Activated CD8-positive, alpha-beta T cell treated with anti-CD3 and anti-CD28 coated beads, Interleukin-2, amount 10 ng/mL, durations not matched to agents 7 days and 5 days (primary cell): ENCODE measurements at regions of chr10 and their contacts with region 1.

Region 1: GRCh38 chr10:97676770-97677581 is 10.1 kb downstream of the AVPI1 start:
- DNase-seq: peak; percentile 58
- ATAC-seq: peak; percentile 82
- H3K4me3 Mint-ChIP-seq: no peak overlapping the region
- H3K27ac Mint-ChIP-seq: no peak overlapping the region
- H3K4me1 Mint-ChIP-seq: peaks cover 23% of the 10 kb centered on the region
- H3K27me3 Mint-ChIP-seq: no peaks in the 10 kb centered on the region

Region 2: GRCh38 chr10:97664282-97664850 is 12.6 kb before region 1 on chr10:
- CTCF ChIA-PET with region 1: interaction called, 11 read pairs
- POLR2A ChIA-PET with region 1: no interaction called
- DNase-seq: no peak
- ATAC-seq: no peak
- H3K4me3 Mint-ChIP-seq: no peak overlapping the region
- H3K27ac Mint-ChIP-seq: no peak overlapping the region
- H3K4me1 Mint-ChIP-seq: peaks cover 3% of the 10 kb centered on the region
- H3K27me3 Mint-ChIP-seq: no peaks in the 10 kb centered on the region

Region 3: DNA sequence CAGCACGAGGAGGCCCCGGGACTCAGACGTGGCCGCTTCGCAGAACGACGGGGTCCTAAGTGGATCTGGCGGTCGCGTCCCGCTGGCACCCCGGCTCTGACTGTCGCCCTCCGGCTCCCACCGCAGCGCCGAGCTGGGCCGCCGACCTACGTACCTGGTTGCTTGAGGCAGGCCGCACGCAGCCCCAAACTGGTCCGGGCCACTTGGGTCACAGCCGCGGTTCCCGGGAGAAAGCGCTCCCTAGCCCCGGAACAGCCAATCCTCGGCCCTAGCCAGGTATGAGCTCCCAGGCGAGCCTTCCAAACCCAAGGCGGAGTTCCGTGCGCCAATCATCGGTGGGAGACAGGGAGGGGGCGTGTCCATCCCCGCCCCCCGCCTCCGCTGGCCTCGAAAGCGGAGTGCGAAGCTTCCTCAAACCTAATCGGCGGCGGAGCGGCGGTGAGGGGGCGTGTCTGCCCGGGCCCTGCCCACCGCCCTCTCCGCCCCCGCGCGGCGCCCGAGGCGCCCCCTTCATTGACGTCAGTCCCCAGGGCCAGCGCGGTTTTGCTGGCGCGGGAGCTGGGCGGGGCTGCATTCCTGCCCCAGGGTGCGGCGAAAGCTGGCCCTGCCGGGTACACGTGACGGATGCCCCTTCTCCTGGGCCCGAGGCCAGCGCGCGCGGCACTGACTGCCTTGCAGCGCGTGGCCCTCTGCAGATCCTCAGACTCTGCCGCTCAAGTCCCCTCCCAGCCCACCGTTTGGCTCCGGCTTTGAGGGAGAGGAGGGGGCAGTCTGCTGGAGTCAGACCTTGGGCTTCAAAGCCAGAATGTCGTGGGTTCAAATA is 10.2 kb after region 1 on chr10 and contains the start of gene AVPI1:
- CTCF ChIA-PET with region 1: interaction called, 52 read pairs
- POLR2A ChIA-PET with region 1: interaction called, 6 read pairs
- DNase-seq: peak; percentile 95
- ATAC-seq: peak; percentile 97
- H3K4me3 Mint-ChIP-seq: peak within 1 kb of the TSS; percentile 82
- H3K27ac Mint-ChIP-seq: peak within 1 kb of the TSS; percentile 74
- H3K4me1 Mint-ChIP-seq: peaks cover 17% of the 10 kb centered on the region
- H3K27me3 Mint-ChIP-seq: no peaks in the 10 kb centered on the region
- total RNA-seq, gene AVPI1: 1.1 to 1.7 TPM